CD8-positive, alpha-beta T cell (primary cell): ENCODE measurements at regions of chr14 and their contacts with region 1.

Region 1: DNA sequence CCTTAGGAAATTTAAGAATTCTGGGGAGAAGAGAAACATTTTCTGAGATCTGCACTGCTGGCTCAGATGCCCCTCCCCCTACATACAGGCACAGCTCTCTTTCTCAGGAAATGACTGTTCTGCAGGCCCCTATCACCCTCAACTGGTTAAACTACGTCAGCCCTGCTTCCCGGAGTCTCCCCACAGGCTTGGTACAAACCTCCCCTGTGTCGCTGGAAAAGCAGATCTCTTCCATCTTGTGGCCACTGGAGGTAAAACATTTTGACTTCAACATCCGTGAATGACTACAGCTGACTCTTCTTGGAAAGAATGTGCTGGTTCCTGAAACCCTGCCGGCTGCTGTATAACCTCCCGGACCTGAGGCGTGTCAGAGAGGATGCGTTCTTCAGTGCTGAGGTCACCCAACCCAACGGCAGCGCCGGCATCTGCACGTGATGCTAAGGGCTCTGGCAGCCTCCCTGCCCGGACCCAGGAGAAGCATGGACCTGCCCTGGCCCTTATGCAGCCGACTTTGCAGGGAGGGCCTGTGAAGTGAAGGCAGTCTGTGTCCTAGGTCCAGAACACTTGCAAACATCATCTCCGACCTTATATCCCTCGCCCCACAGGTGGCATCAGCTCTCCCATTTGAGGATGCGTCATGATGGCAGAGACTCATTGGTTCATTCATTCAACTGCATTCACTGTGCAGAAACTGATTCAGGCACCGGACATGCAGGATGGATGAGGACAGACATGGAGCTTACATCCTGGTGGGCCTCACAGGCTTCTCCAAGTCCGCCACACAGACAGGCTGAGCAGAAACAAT is 129.3 kb downstream of the GCH1 start:
- DNase-seq: peak; percentile 16 to 80 (median 52)
- ATAC-seq: peak; percentile 69
- H3K4me3 ChIP-seq: no peak overlapping the region
- H3K4me3 Mint-ChIP-seq: peak overlapping the region; percentile 6
- H3K27ac ChIP-seq: no peak overlapping the region
- H3K27ac Mint-ChIP-seq: no peak overlapping the region
- H3K4me1 ChIP-seq: peaks cover 24% of the 10 kb centered on the region
- H3K4me1 Mint-ChIP-seq: peaks cover 24% of the 10 kb centered on the region
- H3K27me3 ChIP-seq: peaks cover 0 to 13% of the 10 kb centered on the region in 2 experiments
- H3K27me3 Mint-ChIP-seq: peaks cover 24% of the 10 kb centered on the region
- CTCF ChIP-seq: no peak

Region 2: DNA sequence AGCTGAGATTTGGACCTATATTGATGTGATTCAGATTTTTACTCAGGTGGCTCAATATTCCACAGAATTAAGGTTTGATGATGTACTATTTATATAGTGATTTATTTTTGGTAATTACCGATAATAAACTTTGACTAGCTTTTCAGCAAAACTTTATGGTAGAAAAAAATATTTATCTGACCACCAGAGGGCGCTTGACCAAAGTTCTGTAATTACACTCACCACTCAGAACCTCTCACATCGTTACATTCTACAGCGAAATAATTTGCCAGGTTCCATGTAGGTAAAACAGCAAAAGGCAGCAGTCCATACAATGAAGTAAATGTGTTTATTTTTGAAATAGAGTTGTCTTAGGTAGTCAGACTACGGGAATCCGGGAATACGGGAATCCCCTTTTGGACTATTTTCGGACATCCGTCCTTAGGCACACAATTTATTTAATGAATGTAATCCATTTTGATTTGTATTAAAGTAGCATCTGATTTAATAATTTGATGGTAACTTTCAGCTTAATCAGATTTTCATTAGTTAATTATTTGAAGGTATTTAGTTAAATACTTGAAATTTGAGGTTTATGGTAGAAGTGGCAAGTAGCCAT is 1477.3 kb before region 1 on chr14:
- CTCF ChIA-PET with region 1: no interaction called
- POLR2A ChIA-PET with region 1: no interaction called
- intact Hi-C with region 1: loop called in 1 of 2 experiments (anchors 5 kb)
- DNase-seq: peak in 3 of 9 experiments; percentile 24 to 55 (median 45)
- ATAC-seq: no peak
- H3K4me3 ChIP-seq: no peak overlapping the region
- H3K4me3 Mint-ChIP-seq: no peak overlapping the region
- H3K27ac ChIP-seq: no peak overlapping the region
- H3K27ac Mint-ChIP-seq: no peak overlapping the region
- H3K4me1 ChIP-seq: no peaks in the 10 kb centered on the region
- H3K4me1 Mint-ChIP-seq: no peaks in the 10 kb centered on the region
- H3K27me3 ChIP-seq: no peaks in the 10 kb centered on the region
- H3K27me3 Mint-ChIP-seq: no peaks in the 10 kb centered on the region
- CTCF ChIP-seq: peak; percentile 92

Region 3: DNA sequence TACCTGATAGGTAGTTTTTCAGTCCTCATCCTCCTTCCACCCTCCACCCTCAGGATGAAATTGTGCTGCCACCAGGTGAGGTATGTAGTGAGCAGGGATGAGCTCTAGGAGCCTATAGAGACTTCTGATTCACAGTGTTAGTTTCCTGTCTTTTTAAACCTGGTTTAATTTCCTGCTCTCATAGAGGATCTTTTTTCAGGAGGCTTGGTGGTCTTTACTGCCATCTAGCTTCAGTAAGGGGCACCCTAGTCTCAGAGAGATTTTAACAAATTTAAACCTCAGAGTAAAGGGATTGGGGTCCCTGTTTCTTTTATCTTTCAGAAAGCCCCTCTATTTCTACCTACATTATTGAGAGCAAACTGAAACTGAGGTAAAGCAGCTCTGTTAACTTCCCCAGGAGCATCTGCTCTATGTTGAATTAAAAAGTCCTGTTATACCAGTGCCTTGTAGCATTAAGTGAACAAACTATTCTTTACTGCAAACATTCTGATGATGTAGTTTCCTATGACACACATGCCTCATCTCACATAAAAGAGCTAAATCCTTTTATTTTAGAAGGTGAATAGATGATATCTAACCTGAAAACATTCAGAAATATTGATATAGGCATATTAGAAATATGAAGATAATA is 1448.1 kb before region 1 on chr14:
- CTCF ChIA-PET with region 1: no interaction called
- POLR2A ChIA-PET with region 1: no interaction called
- intact Hi-C with region 1: no loop called
- DNase-seq: peak in 1 of 9 experiments; percentile 2
- ATAC-seq: no peak
- H3K4me3 ChIP-seq: no peak overlapping the region
- H3K4me3 Mint-ChIP-seq: no peak overlapping the region
- H3K27ac ChIP-seq: no peak overlapping the region
- H3K27ac Mint-ChIP-seq: no peak overlapping the region
- H3K4me1 ChIP-seq: no peaks in the 10 kb centered on the region
- H3K4me1 Mint-ChIP-seq: no peaks in the 10 kb centered on the region
- H3K27me3 ChIP-seq: no peaks in the 10 kb centered on the region
- H3K27me3 Mint-ChIP-seq: no peaks in the 10 kb centered on the region
- CTCF ChIP-seq: no peak

Region 4: DNA sequence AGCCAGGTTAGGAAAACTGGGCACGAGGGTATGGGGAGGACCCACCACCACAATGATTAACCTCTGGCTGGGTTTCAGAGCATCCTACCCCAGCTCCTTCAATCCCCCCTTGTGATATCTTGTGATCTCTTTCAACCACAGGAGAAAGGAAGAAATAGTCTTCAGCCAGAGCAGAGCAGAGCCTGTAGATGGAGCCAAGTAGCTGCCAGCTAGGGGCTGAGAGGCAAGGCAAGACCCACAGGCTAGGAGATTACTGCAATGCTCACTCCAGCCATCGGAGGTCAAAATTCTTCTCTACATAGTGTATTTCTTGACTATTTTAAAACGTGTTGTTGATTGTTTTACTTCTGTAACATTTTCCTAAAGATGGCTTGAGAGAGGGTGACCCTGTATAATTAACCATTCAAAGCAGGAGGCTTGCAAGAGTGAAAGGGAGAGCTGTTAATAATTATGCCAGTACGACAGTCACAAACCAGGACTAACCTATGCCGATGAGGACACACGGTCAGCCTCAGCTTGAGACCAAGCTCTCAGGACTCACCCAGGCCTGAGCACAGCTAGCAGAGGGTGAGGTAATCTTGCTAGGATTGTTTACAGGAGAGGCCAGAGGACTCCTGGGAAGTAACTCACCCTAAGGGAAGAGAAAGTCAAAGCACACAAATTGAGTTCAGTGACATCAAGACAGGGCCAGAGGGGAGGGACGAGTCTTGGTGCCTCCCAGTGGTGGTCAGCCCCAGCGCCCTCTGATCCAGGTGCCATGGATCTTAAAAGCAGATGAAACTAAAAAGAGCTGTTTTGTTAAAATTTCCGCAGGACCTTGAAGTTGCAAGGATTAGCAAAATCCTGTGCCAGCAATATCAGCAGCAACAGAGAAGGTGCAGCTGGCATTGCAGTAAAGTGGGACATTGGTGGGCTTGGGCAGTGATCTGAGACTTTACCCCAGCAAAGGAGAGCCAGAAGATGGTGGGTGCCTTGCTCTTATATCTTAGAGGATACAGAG is 406.3 kb before region 1 on chr14:
- CTCF ChIA-PET with region 1: no interaction called
- POLR2A ChIA-PET with region 1: no interaction called
- intact Hi-C with region 1: loop called in 1 of 2 experiments (anchors 10 kb)
- DNase-seq: peak in 8 of 9 experiments; percentile 9 to 61 (median 39)
- ATAC-seq: peak; percentile 94
- H3K4me3 ChIP-seq: no peak overlapping the region
- H3K4me3 Mint-ChIP-seq: no peak overlapping the region
- H3K27ac ChIP-seq: no peak overlapping the region
- H3K27ac Mint-ChIP-seq: no peak overlapping the region
- H3K4me1 ChIP-seq: no peaks in the 10 kb centered on the region
- H3K4me1 Mint-ChIP-seq: peaks cover 1% of the 10 kb centered on the region
- H3K27me3 ChIP-seq: no peaks in the 10 kb centered on the region
- H3K27me3 Mint-ChIP-seq: peaks cover 5% of the 10 kb centered on the region
- CTCF ChIP-seq: peak; percentile 30

Region 5: DNA sequence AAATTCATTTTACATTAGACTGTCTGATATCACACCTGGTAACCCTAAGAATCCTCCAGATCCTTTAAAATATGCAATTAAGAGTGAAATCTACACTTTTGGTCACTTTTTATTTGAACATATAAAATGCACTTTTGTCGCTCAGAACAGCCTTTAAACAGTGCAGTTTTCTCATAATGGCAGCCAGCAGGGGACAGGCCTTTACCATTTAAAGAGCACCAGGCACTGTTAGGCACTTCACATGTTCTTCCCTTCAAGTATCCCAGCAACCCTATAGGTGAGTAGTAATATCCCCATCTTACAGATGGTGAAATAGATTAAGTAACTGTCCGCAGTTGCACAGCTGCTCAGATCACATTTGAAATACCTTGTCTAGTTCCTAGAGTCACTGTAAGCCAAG is 217.7 kb before region 1 on chr14:
- CTCF ChIA-PET with region 1: interaction called, 11 read pairs
- POLR2A ChIA-PET with region 1: interaction called, 3 read pairs
- intact Hi-C with region 1: no loop called
- DNase-seq: no peak
- ATAC-seq: no peak
- H3K4me3 ChIP-seq: no peak overlapping the region
- H3K4me3 Mint-ChIP-seq: no peak overlapping the region
- H3K27ac ChIP-seq: no peak overlapping the region
- H3K27ac Mint-ChIP-seq: no peak overlapping the region
- H3K4me1 ChIP-seq: no peaks in the 10 kb centered on the region
- H3K4me1 Mint-ChIP-seq: no peaks in the 10 kb centered on the region
- H3K27me3 ChIP-seq: no peaks in the 10 kb centered on the region
- H3K27me3 Mint-ChIP-seq: peaks cover 14% of the 10 kb centered on the region
- CTCF ChIP-seq: no peak

Region 6: GRCh38 chr14:54691525-54692283 is 81.7 kb before region 1 on chr14:
- CTCF ChIA-PET with region 1: interaction called, 4 read pairs
- POLR2A ChIA-PET with region 1: no interaction called
- intact Hi-C with region 1: loop called in 1 of 2 experiments (anchors 5 kb)
- DNase-seq: peak in 8 of 9 experiments; percentile 13 to 69 (median 42)
- ATAC-seq: no peak
- H3K4me3 ChIP-seq: no peak overlapping the region
- H3K4me3 Mint-ChIP-seq: no peak overlapping the region
- H3K27ac ChIP-seq: no peak overlapping the region
- H3K27ac Mint-ChIP-seq: no peak overlapping the region
- H3K4me1 ChIP-seq: no peaks in the 10 kb centered on the region
- H3K4me1 Mint-ChIP-seq: no peaks in the 10 kb centered on the region
- H3K27me3 ChIP-seq: no peaks in the 10 kb centered on the region
- H3K27me3 Mint-ChIP-seq: peaks cover 25% of the 10 kb centered on the region
- CTCF ChIP-seq: peak; percentile 57

Region 7: DNA sequence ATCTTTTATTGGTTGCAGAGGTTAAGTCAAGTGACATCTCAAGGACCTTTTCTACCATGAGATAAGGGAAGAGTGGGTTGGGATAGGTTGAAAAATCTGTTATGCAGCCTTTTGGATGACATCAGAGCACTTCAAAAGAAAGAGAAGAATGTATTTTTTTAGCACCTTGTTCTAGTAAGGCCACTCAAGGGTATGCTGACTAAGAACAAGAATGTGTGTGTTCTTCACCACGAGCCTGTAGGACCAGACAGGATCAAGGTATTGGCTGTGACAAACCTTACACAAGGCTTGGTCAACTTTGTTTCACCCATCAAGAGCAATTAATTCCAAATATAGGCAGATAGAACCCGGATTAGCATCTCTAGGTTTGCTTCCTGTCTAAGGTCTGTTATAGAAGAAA is 63.9 kb before region 1 on chr14:
- CTCF ChIA-PET with region 1: no interaction called
- POLR2A ChIA-PET with region 1: no interaction called
- intact Hi-C with region 1: no loop called
- DNase-seq: no peak
- ATAC-seq: no peak
- H3K4me3 ChIP-seq: no peak overlapping the region
- H3K4me3 Mint-ChIP-seq: no peak overlapping the region
- H3K27ac ChIP-seq: no peak overlapping the region
- H3K27ac Mint-ChIP-seq: no peak overlapping the region
- H3K4me1 ChIP-seq: peaks cover 20% of the 10 kb centered on the region
- H3K4me1 Mint-ChIP-seq: peaks cover 17% of the 10 kb centered on the region
- H3K27me3 ChIP-seq: no peaks in the 10 kb centered on the region
- H3K27me3 Mint-ChIP-seq: no peaks in the 10 kb centered on the region
- CTCF ChIP-seq: no peak

Region 8: DNA sequence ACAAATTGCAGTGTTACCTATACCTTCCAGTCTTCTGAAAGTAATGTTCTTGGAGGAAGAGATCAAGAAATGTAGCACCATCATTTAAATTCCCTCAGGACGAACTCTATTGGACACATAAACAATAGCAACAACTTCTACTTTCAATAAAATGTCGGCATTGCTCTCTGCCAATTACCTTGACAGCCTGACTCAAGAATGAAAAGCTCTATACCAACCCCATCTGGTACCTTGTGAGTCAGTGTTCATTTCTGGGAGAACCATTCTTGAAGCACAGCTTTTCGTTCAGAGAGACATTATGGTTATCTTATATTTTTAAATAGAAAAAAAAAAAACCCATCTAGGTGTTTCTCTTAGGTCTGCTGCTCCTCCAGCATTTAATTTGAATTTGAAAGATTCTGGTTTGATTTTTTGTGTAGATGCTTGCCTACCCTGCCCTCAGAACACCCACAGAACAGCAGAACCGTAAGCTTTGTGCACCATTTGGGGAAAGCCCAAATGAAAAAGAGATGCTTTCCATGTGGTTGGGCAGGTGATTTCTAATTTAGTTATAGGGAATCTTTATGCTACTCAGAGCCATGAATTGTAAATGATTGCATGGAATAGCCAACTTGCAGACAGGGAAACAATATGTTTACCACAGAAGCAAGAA is 50.5 kb before region 1 on chr14:
- CTCF ChIA-PET with region 1: interaction called, 5 read pairs
- POLR2A ChIA-PET with region 1: no interaction called
- intact Hi-C with region 1: loop called in 1 of 2 experiments (anchors 5 kb)
- DNase-seq: peak in 2 of 9 experiments; percentile 10 to 48
- ATAC-seq: peak; percentile 51
- H3K4me3 ChIP-seq: no peak overlapping the region
- H3K4me3 Mint-ChIP-seq: no peak overlapping the region
- H3K27ac ChIP-seq: no peak overlapping the region
- H3K27ac Mint-ChIP-seq: no peak overlapping the region
- H3K4me1 ChIP-seq: no peaks in the 10 kb centered on the region
- H3K4me1 Mint-ChIP-seq: peaks cover 3% of the 10 kb centered on the region
- H3K27me3 ChIP-seq: peaks cover 0 to 7% of the 10 kb centered on the region in 2 experiments
- H3K27me3 Mint-ChIP-seq: peaks cover 12% of the 10 kb centered on the region
- CTCF ChIP-seq: no peak

Region 9: DNA sequence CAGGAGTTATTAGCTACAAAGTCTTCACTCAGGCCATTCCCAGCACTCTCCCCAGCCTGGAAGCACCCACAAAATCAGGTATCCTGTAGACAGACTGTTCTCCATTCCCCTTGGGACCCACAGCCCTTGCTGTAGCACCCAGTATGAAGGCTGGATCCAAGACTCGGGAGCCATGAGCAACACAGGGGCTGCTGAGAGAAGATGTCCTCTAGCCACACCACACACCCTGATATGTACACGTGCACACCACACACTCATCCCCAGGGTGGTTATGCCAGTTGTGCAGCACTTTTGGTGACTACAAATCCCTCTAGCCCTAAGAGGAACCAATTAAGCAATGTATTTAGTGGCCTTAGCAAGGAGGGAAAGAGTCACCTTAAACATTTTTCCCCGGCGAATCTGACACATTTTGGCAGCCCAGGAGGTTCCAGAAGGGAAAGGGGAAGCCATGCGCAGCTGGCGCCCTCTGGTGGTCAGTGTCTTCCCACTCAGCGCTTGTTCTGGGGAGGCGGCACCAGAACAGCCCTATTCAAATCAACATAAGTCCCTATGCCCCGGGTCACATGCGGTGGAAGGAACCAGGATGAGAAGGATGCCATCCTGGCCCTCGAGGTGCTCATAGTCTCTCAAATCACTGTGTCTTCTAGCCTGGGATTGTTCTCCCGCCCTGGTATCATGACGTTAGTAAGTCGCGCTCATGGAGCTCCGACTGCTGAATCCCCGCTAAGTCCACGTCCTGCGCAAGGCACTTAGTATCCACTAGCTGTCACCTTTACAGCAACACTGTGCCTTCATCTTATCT is 32.3 kb after region 1 on chr14:
- CTCF ChIA-PET with region 1: interaction called, 12 read pairs
- POLR2A ChIA-PET with region 1: no interaction called
- intact Hi-C with region 1: loop called in 1 of 2 experiments (anchors 1 kb)
- DNase-seq: peak; percentile 36 to 82 (median 71)
- ATAC-seq: peak; percentile 82
- H3K4me3 ChIP-seq: no peak overlapping the region
- H3K4me3 Mint-ChIP-seq: no peak overlapping the region
- H3K27ac ChIP-seq: no peak overlapping the region
- H3K27ac Mint-ChIP-seq: no peak overlapping the region
- H3K4me1 ChIP-seq: no peaks in the 10 kb centered on the region
- H3K4me1 Mint-ChIP-seq: peaks cover 5% of the 10 kb centered on the region
- H3K27me3 ChIP-seq: no peaks in the 10 kb centered on the region
- H3K27me3 Mint-ChIP-seq: peaks cover 8% of the 10 kb centered on the region
- CTCF ChIP-seq: peak; percentile 76

Region 10: DNA sequence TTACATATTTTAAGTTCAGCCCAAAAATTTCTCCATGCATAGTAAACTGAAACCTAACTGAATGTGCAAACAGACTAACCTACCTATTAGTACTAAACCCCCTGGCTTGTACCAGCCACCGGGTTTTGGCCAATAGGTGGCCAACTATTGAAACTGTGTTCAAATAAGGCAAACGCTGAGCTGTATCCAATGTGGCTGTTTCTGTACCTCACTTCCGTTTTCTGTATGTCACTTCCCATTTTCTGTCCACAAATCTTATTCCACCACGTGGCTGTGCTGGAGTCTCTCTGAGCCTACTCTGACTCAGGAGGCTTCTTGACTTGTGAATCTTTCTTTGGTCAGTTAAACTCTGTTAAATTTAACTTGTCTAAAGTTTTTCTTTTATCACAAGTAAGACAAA is 491.8 kb after region 1 on chr14:
- CTCF ChIA-PET with region 1: no interaction called
- POLR2A ChIA-PET with region 1: no interaction called
- intact Hi-C with region 1: no loop called
- DNase-seq: peak in 2 of 9 experiments; percentile 22 to 44
- ATAC-seq: no peak
- H3K4me3 ChIP-seq: no peak overlapping the region
- H3K4me3 Mint-ChIP-seq: no peak overlapping the region
- H3K27ac ChIP-seq: no peak overlapping the region
- H3K27ac Mint-ChIP-seq: no peak overlapping the region
- H3K4me1 ChIP-seq: no peaks in the 10 kb centered on the region
- H3K4me1 Mint-ChIP-seq: no peaks in the 10 kb centered on the region
- H3K27me3 ChIP-seq: no peaks in the 10 kb centered on the region
- H3K27me3 Mint-ChIP-seq: no peaks in the 10 kb centered on the region
- CTCF ChIP-seq: no peak